Activated T-helper 2 cell treated with anti-CD3 and anti-CD28 coated beads, Interferon-gamma antibody, Interleukin-2, Interleukin-4, amounts not matched to agents 10 μg/mL and 5 μg/mL and 100 μg/mL, durations not matched to agents 14 hours and 24 hours and 36 hours (primary cell): ENCODE measurements at regions of chr4 and their contacts with region 1.

Region 1: DNA sequence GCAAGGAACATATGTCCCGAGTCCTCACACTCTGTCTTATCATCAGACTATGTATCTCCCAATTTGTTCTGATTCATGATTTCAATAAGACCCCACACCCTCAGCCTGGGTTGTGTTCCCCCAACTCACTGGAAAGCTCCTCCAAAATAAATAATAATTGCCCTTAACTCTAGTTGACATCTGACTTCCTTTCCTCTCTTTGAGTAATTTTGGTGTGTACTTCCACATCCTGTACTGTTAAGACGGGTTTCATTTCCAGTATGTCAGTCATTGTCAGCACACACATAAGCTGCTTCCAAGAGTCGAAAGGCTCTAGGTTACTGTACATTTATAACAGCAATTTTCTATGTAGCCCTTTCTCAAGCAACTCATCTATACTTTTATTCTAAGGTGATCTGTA is 52.2 kb upstream of the C1QTNF7 start:
- DNase-seq: no peak
- H3K4me3 Mint-ChIP-seq: no peak overlapping the region
- H3K27ac Mint-ChIP-seq: peak overlapping the region; percentile 49
- H3K4me1 Mint-ChIP-seq: peaks cover 69% of the 10 kb centered on the region
- H3K27me3 Mint-ChIP-seq: no peaks in the 10 kb centered on the region

Region 2: GRCh38 chr4:14856076-14856933 is 519.4 kb before region 1 on chr4:
- intact Hi-C with region 1: loop called (anchors 10 kb)
- DNase-seq: peak; percentile 24
- H3K4me3 Mint-ChIP-seq: no peak overlapping the region
- H3K27ac Mint-ChIP-seq: peak overlapping the region; percentile 81
- H3K4me1 Mint-ChIP-seq: peaks cover 26% of the 10 kb centered on the region
- H3K27me3 Mint-ChIP-seq: no peaks in the 10 kb centered on the region

Region 3: GRCh38 chr4:15231265-15232091 is 144.2 kb before region 1 on chr4:
- intact Hi-C with region 1: loop called (anchors 5 kb)
- DNase-seq: peak; percentile 61
- H3K4me3 Mint-ChIP-seq: no peak overlapping the region
- H3K27ac Mint-ChIP-seq: no peak overlapping the region
- H3K4me1 Mint-ChIP-seq: peaks cover 30% of the 10 kb centered on the region
- H3K27me3 Mint-ChIP-seq: peaks cover 2% of the 10 kb centered on the region

Region 4: GRCh38 chr4:15396157-15396800 is 20.6 kb after region 1 on chr4:
- intact Hi-C with region 1: loop called (anchors 1 kb)
- DNase-seq: peak; percentile 46
- H3K4me3 Mint-ChIP-seq: no peak overlapping the region
- H3K27ac Mint-ChIP-seq: no peak overlapping the region
- H3K4me1 Mint-ChIP-seq: peaks cover 16% of the 10 kb centered on the region
- H3K27me3 Mint-ChIP-seq: no peaks in the 10 kb centered on the region

Region 5: GRCh38 chr4:15425520-15425919 is 49.9 kb after region 1 on chr4:
- intact Hi-C with region 1: loop called (anchors 1 kb)
- DNase-seq: no peak
- H3K4me3 Mint-ChIP-seq: no peak overlapping the region
- H3K27ac Mint-ChIP-seq: no peak overlapping the region
- H3K4me1 Mint-ChIP-seq: peaks cover 33% of the 10 kb centered on the region
- H3K27me3 Mint-ChIP-seq: peaks cover 2% of the 10 kb centered on the region

Region 6: GRCh38 chr4:15649914-15650545 is 274.4 kb after region 1 on chr4:
- intact Hi-C with region 1: loop called (anchors 5 kb)
- DNase-seq: peak; percentile 56
- H3K4me3 Mint-ChIP-seq: peak overlapping the region; percentile 3
- H3K27ac Mint-ChIP-seq: peak overlapping the region; percentile 57
- H3K4me1 Mint-ChIP-seq: peaks cover 50% of the 10 kb centered on the region
- H3K27me3 Mint-ChIP-seq: no peaks in the 10 kb centered on the region